ENCODE measurements at regions of chr7 and their contacts with region 1.

Region 1: DNA sequence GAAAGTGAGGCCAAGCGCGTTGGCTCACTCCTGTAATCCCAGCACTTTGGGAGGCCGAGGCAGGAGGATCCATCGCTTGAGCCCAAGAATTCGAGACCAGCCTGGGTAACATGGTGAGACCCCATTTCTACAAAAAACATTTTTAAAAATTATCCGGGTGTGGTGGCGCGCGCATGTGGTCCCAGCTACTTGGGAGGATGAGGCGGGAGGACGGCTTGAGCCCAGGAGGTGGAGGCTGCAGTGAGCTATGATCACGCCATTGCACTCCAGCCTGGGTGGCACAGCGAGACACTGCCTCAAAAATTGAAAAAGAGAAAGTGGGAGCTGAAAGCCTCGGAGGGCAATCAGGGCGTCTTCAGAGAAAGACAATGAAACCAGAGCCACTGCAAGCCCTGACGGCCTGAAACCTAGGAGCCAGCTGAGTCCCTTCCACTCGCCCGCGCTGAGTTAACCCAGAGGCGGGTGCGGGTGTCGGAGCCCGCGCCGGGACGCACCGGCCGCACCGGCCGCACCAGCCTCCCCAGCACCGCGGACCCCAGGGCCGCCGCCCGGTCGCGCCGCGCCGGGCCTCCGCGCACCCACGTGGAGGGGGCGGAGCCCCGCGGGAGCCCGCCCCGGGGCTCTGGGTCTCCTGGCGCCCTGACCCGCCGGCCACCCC is 22.4 kb downstream of the ZFAND2A start:
- DNase-seq: no peak
- ATAC-seq: peak; percentile 83 to 90
- H3K4me3 ChIP-seq: peak overlapping the region; percentile 76
- H3K27ac ChIP-seq: no peak overlapping the region
- H3K4me1 ChIP-seq: peaks cover 6% of the 10 kb centered on the region
- H3K27me3 ChIP-seq: no peaks in the 10 kb centered on the region

Region 2: GRCh38 chr7:1096156-1097119 is 41.2 kb before region 1 on chr7:
- intact Hi-C with region 1: loop called in 1 of 4 experiments (anchors 5 kb)
- DNase-seq: peak in 1 of 3 donors; percentile 69
- ATAC-seq: peak; percentile 30 to 33
- H3K4me3 ChIP-seq: no peak overlapping the region
- H3K27ac ChIP-seq: no peak overlapping the region
- H3K4me1 ChIP-seq: no peaks in the 10 kb centered on the region
- H3K27me3 ChIP-seq: no peaks in the 10 kb centered on the region

Region 3: GRCh38 chr7:1331561-1332488 is 194.2 kb after region 1 on chr7:
- intact Hi-C with region 1: no loop called
- DNase-seq: no peak
- ATAC-seq: no peak
- H3K4me3 ChIP-seq: no peak overlapping the region
- H3K27ac ChIP-seq: no peak overlapping the region
- H3K4me1 ChIP-seq: no peaks in the 10 kb centered on the region
- H3K27me3 ChIP-seq: no peaks in the 10 kb centered on the region

Measured in right cardiac atrium (tissue), 5 donors.